ENCODE measurements at regions of chr2 and their contacts with region 1.

Region 1: DNA sequence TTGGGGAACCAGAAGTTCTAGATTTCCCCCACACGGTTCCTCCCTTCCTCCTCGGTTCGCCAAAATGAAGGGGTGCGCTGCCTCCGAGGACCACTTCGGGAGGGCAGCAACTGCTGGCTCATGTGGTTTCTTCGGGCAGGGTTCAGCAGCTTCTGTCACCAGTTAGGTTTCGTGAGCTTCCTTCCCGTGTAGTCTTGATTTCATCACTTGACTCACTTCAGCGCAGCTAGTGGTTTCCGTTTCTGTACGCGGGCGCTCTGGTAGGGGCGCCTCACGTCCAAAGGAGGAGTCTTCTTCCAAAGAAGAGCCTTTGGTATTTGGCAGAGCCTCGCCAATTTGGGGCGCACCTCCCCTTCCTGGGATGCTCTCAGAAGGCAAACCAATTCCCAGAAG is 485 bp upstream of the GALNT3 start:
- DNase-seq: peak; percentile 44
- H3K4me3 Mint-ChIP-seq: peak overlapping the region; percentile 83
- H3K27ac Mint-ChIP-seq: peak overlapping the region; percentile 92
- H3K4me1 Mint-ChIP-seq: peaks cover 26% of the 10 kb centered on the region
- H3K27me3 Mint-ChIP-seq: no peaks in the 10 kb centered on the region
- CTCF ChIP-seq: no peak

Region 2: DNA sequence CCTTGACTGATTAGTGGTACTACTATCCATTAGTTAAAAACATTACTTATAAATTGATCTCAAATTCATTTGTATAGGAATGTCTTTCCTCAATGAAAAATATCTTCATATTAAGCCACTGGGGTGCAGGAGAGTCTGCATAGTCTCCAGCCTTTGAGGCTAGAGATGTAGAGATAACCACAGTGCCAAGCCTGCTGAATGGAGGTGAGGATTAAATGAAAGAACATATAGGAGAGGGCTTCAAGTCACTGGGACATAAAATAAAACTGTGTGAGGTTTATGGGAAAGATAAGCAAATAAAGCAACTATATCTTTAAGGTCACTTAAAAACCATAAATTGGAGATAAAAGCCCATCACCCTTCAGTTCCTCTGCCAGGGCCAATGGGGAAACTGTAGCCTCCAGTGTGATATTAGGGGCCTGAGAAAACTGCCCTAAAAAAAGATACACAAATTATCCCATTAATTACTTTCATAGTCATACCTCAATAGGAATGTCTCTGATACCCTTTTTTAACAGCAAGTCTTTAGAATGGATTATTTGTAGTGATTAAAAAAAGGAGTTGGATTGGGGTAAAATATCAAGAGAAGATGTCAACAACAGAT is 28.1 kb before region 1 on chr2:
- CTCF ChIA-PET with region 1: no interaction called
- intact Hi-C with region 1: loop called (anchors 2 kb)
- DNase-seq: peak; percentile 10
- H3K4me3 Mint-ChIP-seq: peak overlapping the region; percentile 29
- H3K27ac Mint-ChIP-seq: peak overlapping the region; percentile 43
- H3K4me1 Mint-ChIP-seq: peaks cover 22% of the 10 kb centered on the region
- H3K27me3 Mint-ChIP-seq: no peaks in the 10 kb centered on the region
- CTCF ChIP-seq: no peak

Region 3: DNA sequence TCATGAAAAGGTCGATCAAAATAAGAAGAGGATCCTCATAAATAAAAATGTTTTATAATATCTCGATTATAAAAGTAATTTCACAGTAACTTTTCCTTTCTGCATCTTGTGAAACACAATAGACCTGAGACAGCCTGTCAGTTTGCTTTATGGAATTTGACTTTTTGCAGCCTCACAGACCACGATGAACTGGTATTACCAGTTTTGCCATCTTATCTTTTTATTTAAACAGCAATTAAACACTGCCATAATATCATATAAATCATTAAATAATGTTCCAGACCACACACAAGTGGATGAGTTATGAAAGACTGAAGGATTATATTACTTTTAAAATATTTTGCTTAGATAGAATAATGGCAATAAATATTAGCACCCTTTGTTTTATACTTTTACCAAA is 10.2 kb after region 1 on chr2:
- CTCF ChIA-PET with region 1: interaction called, 8 read pairs
- intact Hi-C with region 1: loop called (anchors 1 kb)
- DNase-seq: peak; percentile 26
- H3K4me3 Mint-ChIP-seq: no peak overlapping the region
- H3K27ac Mint-ChIP-seq: peak overlapping the region; percentile 39
- H3K4me1 Mint-ChIP-seq: peaks cover 16% of the 10 kb centered on the region
- H3K27me3 Mint-ChIP-seq: no peaks in the 10 kb centered on the region
- CTCF ChIP-seq: no peak

Region 4: GRCh38 chr2:166239548-166239947 is 445.0 kb after region 1 on chr2:
- CTCF ChIA-PET with region 1: no interaction called
- intact Hi-C with region 1: loop called (anchors 10 kb)
- DNase-seq: peak; percentile 61
- H3K4me3 Mint-ChIP-seq: no peak overlapping the region
- H3K27ac Mint-ChIP-seq: peak overlapping the region; percentile 73
- H3K4me1 Mint-ChIP-seq: peaks cover 53% of the 10 kb centered on the region
- H3K27me3 Mint-ChIP-seq: no peaks in the 10 kb centered on the region
- CTCF ChIP-seq: no peak